ENCODE measurements at regions of chr5 and their contacts with region 1.

Region 1: DNA sequence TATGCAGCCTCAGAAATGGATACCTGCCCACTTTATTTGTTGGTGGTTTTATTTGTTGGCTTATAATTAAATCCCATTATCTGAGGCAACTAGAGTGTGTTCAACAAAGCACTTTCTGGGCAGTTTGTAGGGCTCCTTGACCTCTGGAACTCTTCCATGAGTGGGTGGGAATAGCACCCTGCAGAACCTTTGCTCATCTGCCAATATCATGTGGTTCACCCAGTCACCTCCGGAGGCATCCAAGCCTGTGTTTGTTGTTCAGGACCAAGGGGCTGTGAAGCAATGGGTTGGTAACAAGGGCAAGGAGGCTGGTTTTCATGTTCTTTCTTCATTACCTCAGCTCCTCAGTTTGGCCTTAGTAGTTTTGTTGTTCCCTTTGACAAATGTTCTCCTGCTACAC is 314.0 kb downstream of the NDUFS4 start:
- ATAC-seq: peak in 2 of 8 experiments; percentile 27 to 29
- H3K4me3 ChIP-seq: no peak overlapping the region
- H3K27ac ChIP-seq: no peak overlapping the region
- H3K4me1 ChIP-seq: no peaks in the 10 kb centered on the region

Region 2: DNA sequence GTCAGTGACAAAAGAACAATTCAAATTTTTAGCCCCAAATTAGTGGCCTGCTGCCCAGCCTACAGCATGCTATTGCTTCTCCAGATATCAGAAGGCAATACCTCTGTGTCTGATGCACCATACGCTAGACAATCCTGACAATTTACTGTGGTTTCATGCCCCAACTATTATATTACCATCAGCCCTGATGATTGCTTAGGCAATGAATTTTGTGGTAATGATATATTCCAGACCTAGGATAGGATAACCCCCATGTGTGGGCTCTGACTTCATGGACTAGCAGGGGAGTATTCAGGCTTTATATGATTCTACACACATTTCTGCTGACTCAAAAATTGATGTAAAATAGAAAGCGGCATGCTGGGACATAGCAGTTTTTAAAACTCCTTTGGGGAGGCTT is 562.7 kb before region 1 on chr5:
- in situ Hi-C with region 1: no loop called
- ATAC-seq: peak in 1 of 8 experiments; percentile 38
- H3K4me3 ChIP-seq: no peak overlapping the region
- H3K27ac ChIP-seq: no peak overlapping the region
- H3K4me1 ChIP-seq: no peaks in the 10 kb centered on the region

Region 3: GRCh38 chr5:53481887-53482716 is 392.3 kb before region 1 on chr5:
- in situ Hi-C with region 1: loop called in 1 of 9 experiments (anchors 25 kb)
- ATAC-seq: peak in 4 of 8 experiments; percentile 9 to 60 (median 54)
- H3K4me3 ChIP-seq: peak overlapping the region; percentile 12 to 56 (median 24)
- H3K27ac ChIP-seq: no peak overlapping the region
- H3K4me1 ChIP-seq: peaks cover 0 to 2% of the 10 kb centered on the region in 2 donors

Region 4: GRCh38 chr5:53597894-53598293 is 276.5 kb before region 1 on chr5:
- in situ Hi-C with region 1: no loop called
- ATAC-seq: no peak
- H3K4me3 ChIP-seq: no peak overlapping the region
- H3K27ac ChIP-seq: no peak overlapping the region
- H3K4me1 ChIP-seq: no peaks in the 10 kb centered on the region

Region 5: DNA sequence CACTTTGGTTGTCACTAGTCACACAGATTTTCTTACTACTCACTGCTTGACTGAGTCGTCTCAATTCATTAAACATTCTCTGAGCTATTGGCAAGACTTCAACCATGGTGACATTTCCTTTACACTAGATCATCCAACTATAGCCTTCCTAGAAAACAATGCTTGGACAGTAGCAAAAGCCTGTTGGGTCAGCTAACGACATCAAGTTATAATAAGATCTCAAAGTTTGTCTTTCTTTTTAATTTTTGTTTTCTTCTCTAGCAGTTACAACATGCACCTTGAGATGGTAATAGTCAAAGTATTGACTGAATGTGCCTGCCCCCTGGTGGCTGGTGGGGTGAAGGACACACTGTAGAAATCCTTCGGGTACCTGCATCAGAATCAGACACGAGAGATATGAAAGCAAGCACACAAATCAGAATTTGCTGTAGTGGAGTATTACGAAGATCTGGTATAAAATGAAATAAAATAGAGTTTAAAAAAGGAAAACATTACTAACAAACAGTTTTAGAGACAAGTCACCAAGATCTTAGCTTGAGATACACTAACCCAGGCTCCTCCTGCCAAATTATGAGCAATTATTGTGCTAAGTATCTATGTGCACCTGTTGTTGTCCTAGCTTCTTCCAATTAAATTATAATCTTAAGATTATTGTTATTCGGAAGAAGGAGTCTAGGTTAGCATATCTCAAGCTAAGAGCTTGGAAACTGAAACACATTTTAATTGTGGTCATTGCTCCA is 354.8 kb after region 1 on chr5:
- in situ Hi-C with region 1: loop called in 1 of 9 experiments (anchors 10 kb)
- ATAC-seq: peak in 4 of 8 experiments; percentile 62 to 82 (median 76)
- H3K4me3 ChIP-seq: no peak overlapping the region
- H3K27ac ChIP-seq: no peak overlapping the region
- H3K4me1 ChIP-seq: no peaks in the 10 kb centered on the region